ENCODE measurements at regions of chr14 and their contacts with region 1.

Region 1: DNA sequence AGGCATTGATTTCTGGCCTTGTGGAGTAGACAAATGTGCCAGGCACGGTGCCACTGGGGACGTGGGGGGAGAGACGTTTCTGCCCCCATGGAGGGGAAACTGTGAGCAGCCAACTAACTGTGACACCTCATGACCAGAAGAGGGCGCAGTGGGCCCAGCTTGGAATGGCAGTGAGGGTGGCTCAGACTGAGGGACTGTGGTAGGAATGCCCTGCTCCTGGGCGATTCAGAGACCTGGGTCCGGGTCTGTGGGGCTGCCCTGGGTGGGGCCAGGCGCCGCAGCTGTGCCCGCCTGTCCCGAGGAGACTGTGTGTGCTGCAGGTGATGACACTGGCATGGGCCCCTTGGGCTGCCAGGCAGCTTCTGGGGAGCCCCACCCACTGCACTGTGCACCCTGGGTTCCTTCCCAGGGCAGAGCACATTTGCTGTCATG is 60.6 kb downstream of the SLC25A47 start:
- DNase-seq: no peak
- ATAC-seq: peak; percentile 96
- H3K4me3 ChIP-seq: no peak overlapping the region
- H3K27ac ChIP-seq: no peak overlapping the region; the same call in 1 of the 2 replicates
- H3K4me1 ChIP-seq: peaks cover 2 to 15% of the 10 kb centered on the region in 2 experiments; a peak in 3 of 4 replicates
- H3K27me3 ChIP-seq: no peaks in the 10 kb centered on the region
- CTCF ChIP-seq: peak; percentile 76 to 85 (median 83)
- POLR2A ChIP-seq: no peak
- RAD21 ChIP-seq: peak; percentile 82

Region 2: DNA sequence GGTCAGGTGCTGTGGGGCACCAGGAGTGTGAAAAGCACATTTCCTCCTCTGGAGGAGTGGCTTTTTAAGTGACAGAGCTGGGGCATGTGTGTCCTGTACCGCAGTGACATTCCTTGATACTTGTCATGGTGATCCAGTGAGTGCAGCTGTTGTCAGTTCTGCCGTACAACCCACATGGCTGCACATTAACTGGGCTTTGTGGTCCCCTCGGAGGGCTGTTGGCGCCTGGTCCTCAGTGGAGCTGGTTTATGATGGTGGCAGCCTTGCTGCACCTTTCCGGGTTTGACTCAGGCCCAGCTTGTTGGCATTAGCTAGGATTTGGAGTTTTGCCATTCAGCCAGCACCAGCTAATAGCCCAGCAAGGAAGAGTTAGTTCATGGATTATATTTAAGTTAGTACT is 16.4 kb after region 1 on chr14:
- CTCF ChIA-PET with region 1: interaction called, 11 read pairs
- POLR2A ChIA-PET with region 1: no interaction called
- RAD21 ChIA-PET with region 1: interaction called in 1 of 2 experiments, 3 read pairs
- intact Hi-C with region 1: no loop called
- DNase-seq: no peak
- ATAC-seq: no peak
- H3K4me3 ChIP-seq: no peak overlapping the region
- H3K27ac ChIP-seq: no peak overlapping the region
- H3K4me1 ChIP-seq: no peaks in the 10 kb centered on the region; a peak in 1 of 4 replicates
- H3K27me3 ChIP-seq: no peaks in the 10 kb centered on the region
- CTCF ChIP-seq: no peak
- POLR2A ChIP-seq: no peak
- RAD21 ChIP-seq: no peak

Region 3: DNA sequence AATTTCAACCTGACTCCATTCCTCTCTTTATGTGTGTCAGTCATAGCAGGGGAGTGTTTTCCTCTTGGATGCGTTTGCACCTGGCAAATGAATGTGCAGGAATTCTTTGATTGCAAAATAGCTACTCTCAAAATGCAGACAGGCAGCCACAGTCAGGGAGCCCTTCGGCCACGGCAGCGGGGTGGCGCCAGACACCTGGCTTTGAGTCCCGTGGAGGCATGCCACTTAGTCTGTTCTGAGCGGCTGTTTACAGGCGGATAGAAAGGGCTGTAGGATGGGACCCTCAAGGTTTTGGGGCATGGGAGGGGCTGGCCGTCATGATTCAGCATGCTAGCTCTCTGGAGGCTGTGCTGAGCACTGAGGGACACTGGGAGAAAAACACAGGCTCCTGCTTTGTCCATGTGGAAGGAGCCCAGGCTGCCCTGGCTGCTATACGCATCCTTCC is 56.5 kb after region 1 on chr14:
- CTCF ChIA-PET with region 1: interaction called, 29 read pairs
- POLR2A ChIA-PET with region 1: interaction called, 3 read pairs
- RAD21 ChIA-PET with region 1: interaction called in 1 of 2 experiments, 5 read pairs
- intact Hi-C with region 1: no loop called
- DNase-seq: no peak
- ATAC-seq: peak; percentile 75
- H3K4me3 ChIP-seq: peak overlapping the region in 1 of 2 experiments; percentile 42; a peak in 2 of 4 replicates
- H3K27ac ChIP-seq: peak overlapping the region; percentile 77
- H3K4me1 ChIP-seq: peaks cover 43 to 78% of the 10 kb centered on the region in 2 experiments
- H3K27me3 ChIP-seq: no peaks in the 10 kb centered on the region
- CTCF ChIP-seq: peak; percentile 87 to 94 (median 93)
- POLR2A ChIP-seq: no peak
- RAD21 ChIP-seq: peak; percentile 98

Region 4: DNA sequence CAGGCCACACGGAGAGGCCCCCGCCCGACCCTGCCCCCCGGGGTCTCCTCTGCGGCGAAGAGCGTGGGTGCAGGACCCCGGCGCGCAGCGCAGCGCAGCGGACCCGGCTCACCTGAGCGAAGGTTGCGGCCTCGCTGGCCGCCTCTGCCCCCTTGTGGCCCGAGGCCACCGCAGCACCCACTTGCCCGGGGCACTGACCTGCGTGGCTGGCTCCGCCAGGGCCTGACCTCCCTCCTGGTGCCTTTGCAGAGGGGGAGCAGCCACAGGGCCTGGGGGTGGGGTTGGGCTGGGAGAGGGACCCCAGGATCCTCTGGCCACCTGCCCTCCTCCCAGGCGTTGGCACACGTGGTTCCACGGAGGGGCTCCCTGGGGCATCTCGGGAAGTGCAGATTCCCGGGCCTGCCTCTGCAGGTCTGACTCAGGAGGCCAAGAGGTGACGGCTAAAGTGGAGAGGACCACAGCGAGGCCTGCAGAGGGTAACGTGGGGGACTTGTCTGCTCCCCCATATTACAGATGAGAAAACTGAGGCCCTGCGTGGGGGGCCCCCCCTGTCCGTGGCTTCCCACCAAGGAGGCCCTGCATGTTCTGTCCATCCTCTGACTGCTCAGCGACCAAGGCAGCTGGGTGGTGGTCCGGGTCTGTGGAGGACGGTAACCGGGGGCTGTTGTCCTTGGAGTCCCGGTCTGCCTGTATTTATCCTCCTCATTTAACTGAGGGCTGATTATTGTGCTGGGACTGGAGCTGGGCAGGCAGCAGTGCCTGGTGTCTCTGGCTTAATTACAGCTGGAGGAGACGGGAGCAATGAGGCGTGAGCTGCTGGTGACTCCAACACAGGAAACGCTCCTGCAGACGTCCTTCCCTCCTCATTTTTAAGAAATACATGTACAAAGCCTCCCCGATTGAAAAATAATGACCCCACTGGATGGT is 271.3 kb after region 1 on chr14:
- CTCF ChIA-PET with region 1: interaction called, 100 read pairs
- POLR2A ChIA-PET with region 1: interaction called, 4 read pairs
- RAD21 ChIA-PET with region 1: interaction called, 4 to 5 read pairs
- intact Hi-C with region 1: loop called (anchors 1 kb)
- DNase-seq: no peak
- ATAC-seq: peak; percentile 89
- H3K4me3 ChIP-seq: peak overlapping the region; percentile 28 to 44; a peak in 2 of 4 replicates
- H3K27ac ChIP-seq: no peak overlapping the region
- H3K4me1 ChIP-seq: peaks cover 4 to 39% of the 10 kb centered on the region in 2 experiments; a peak in 3 of 4 replicates
- H3K27me3 ChIP-seq: no peaks in the 10 kb centered on the region
- CTCF ChIP-seq: peak in 2 of 3 experiments; percentile 69 to 93; a peak in 4 of 6 replicates
- POLR2A ChIP-seq: no peak
- RAD21 ChIP-seq: no peak

Region 5: GRCh38 chr14:100900837-100901390 is 517.2 kb after region 1 on chr14:
- CTCF ChIA-PET with region 1: interaction called, 14 read pairs
- POLR2A ChIA-PET with region 1: no interaction called
- RAD21 ChIA-PET with region 1: no interaction called
- intact Hi-C with region 1: loop called (anchors 2 kb)
- DNase-seq: peak; percentile 41
- ATAC-seq: peak; percentile 88
- H3K4me3 ChIP-seq: no peak overlapping the region
- H3K27ac ChIP-seq: no peak overlapping the region
- H3K4me1 ChIP-seq: peaks cover 0 to 7% of the 10 kb centered on the region in 2 experiments; a peak in 1 of 4 replicates
- H3K27me3 ChIP-seq: 0 out of 2 replicates have a peak, but pooled peaks cover 3% of the 10 kb centered on the region
- CTCF ChIP-seq: peak; percentile 65 to 92 (median 78)
- POLR2A ChIP-seq: no peak
- RAD21 ChIP-seq: peak; percentile 97

Region 6: DNA sequence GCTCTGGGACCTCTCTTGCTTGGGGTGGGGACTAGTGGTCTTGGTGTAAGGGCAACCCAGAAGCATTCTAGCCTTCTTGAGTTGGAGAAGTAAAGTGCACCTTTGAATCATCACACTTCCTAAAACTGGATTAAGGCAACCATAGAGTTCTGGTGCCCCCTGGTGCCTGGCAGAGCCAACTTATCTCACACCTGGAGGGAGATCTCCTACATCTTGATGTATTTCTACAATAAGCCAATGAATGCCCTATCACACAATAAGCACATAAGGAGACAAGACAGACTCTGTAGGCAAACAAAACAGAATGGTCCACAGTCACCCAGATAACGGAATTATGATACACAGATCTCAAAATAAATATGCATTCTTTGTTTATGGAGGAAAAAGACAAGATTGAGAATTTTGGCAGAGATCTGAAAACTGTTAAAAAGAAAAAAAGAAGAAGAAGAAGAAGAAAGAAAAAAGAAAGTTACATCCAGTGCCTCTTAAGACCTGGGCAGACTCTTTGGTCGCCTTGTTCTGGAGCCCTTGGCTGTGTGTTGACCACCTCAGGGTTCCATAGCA is 1281.9 kb after region 1 on chr14:
- CTCF ChIA-PET with region 1: interaction called, 3 read pairs
- POLR2A ChIA-PET with region 1: no interaction called
- RAD21 ChIA-PET with region 1: no interaction called
- intact Hi-C with region 1: loop called (anchors 5 kb)
- DNase-seq: peak; percentile 57
- ATAC-seq: peak; percentile 98
- H3K4me3 ChIP-seq: no peak overlapping the region
- H3K27ac ChIP-seq: no peak overlapping the region
- H3K4me1 ChIP-seq: no peaks in the 10 kb centered on the region
- H3K27me3 ChIP-seq: no peaks in the 10 kb centered on the region
- CTCF ChIP-seq: peak; percentile 67 to 76 (median 69); a peak in 5 of 6 replicates
- POLR2A ChIP-seq: no peak
- RAD21 ChIP-seq: peak; percentile 90